PC-3 (cell line): ENCODE measurements at regions of chr1 and their contacts with region 1.

Region 1: GRCh38 chr1:169106095-169106920 is at the start of gene ATP1B1:
- DNase-seq: peak; percentile 96
- ATAC-seq: peak; percentile 76
- H3K4me3 ChIP-seq: peak within 1 kb of the TSS; percentile 93
- H3K27ac ChIP-seq: peak within 1 kb of the TSS; percentile 64
- H3K4me1 ChIP-seq: peaks cover 52% of the 10 kb centered on the region
- H3K27me3 ChIP-seq: no peaks in the 10 kb centered on the region
- CTCF ChIP-seq: 0 out of 2 replicates have a peak, but pooled peaks have one; percentile 7
- total RNA-seq, gene ATP1B1: 68.7 and 76.6 TPM in 2 replicates

Region 2: DNA sequence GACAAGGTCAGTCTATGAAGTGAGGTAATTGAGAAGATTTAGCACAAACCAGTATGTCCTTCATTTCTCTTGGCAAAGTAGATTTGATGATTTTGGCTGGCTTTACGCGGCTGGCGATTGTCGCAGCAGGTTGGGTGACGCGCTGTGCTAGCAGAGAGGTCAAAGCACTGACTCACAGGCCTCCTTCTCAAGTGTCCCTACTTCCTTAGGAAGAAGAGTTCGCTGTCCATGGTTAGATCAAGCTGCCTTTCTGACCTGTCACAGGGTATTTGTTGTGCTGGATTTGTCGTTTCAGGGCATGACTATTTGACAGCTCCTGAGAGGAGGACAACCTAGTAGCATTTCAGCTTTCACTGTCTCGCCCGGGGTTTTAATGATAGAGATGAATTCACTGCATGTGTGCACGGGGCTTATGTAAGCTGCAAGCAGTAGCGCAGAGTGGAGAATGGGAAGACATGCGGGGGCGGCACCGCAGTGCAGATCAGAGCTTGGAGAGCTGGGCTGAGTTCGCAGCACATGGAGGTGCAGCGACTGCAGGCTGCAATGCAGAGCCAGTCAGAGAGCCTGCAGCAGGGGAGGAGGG is 497.1 kb before region 1 on chr1:
- CTCF ChIA-PET with region 1: no interaction called
- POLR2A ChIA-PET with region 1: no interaction called
- intact Hi-C with region 1: loop called (anchors 5 kb)
- DNase-seq: peak; percentile 34
- ATAC-seq: no peak
- H3K4me3 ChIP-seq: no peak overlapping the region
- H3K27ac ChIP-seq: no peak overlapping the region
- H3K4me1 ChIP-seq: peaks cover 8% of the 10 kb centered on the region; the same call in 1 of the 2 replicates
- H3K27me3 ChIP-seq: no peaks in the 10 kb centered on the region
- CTCF ChIP-seq: no peak

Region 3: GRCh38 chr1:168752171-168752832 is 354.0 kb before region 1 on chr1:
- CTCF ChIA-PET with region 1: no interaction called
- POLR2A ChIA-PET with region 1: no interaction called
- intact Hi-C with region 1: loop called (anchors 5 kb)
- DNase-seq: peak; percentile 91
- ATAC-seq: peak; percentile 92
- H3K4me3 ChIP-seq: peak overlapping the region; percentile 47
- H3K27ac ChIP-seq: peak overlapping the region; percentile 77
- H3K4me1 ChIP-seq: peaks cover 24% of the 10 kb centered on the region
- H3K27me3 ChIP-seq: no peaks in the 10 kb centered on the region
- CTCF ChIP-seq: no peak

Region 4: DNA sequence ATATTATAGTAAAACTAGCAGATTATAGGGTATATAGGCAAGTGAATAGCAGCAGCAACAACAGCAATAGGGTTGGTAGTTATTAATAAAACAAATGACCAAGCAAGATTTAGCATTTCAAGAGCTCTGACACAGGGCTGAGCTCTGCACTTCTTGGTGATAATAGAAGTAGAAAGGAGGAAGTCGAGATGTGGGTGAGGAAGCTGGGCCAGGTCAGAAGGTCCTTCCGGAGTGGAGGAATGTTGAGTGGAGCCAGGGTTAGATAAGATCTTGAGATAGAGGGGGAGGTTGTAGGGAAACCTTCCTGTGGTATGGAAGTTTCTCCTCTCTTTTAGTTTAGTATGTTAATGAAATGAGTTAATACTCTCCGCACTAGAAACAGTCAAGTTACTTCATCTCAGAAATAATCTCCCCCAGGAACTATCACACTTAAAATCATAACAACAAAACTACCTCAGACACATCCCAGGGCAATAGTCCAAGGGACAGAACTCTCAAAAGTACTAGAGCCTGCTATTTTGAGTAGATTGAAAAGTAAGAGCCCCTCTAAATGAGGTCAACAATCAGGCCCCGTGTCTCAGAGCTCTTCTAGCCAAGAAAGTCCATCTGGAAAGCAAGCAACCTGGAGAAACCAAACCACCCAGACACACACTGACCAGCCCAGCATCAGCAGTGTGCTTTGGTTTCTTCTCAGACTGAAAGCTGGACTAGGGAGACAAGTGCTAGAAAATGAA is 45.2 kb before region 1 on chr1:
- CTCF ChIA-PET with region 1: no interaction called
- POLR2A ChIA-PET with region 1: interaction called, 8 read pairs
- intact Hi-C with region 1: loop called (anchors 1 kb)
- DNase-seq: peak; percentile 66
- ATAC-seq: peak; percentile 10
- H3K4me3 ChIP-seq: peak overlapping the region; percentile 8; the same call in 1 of the 2 replicates
- H3K27ac ChIP-seq: peak overlapping the region; percentile 93
- H3K4me1 ChIP-seq: peaks cover 34% of the 10 kb centered on the region
- H3K27me3 ChIP-seq: no peaks in the 10 kb centered on the region
- CTCF ChIP-seq: no peak

Region 5: DNA sequence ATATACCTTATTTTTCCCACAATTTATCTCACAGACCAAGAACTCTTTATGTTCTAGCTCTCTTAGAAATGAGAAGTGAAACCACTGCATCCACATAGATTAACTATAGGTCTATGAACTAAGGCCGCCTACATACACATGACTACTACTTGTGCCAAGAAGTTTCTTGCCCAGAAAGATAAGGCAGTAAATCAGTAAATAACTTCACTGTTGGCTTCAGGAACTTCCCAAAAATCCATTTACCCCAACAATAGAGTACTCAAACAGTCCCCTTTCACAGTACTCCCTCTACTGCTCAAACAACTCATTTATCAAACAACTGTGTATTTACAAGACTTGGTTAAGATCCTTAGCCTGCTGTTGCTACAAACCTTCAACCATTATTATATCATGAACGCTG is 164.8 kb after region 1 on chr1:
- CTCF ChIA-PET with region 1: no interaction called
- POLR2A ChIA-PET with region 1: no interaction called
- intact Hi-C with region 1: loop called (anchors 2 kb)
- DNase-seq: peak; percentile 50
- ATAC-seq: peak; percentile 69
- H3K4me3 ChIP-seq: no peak overlapping the region
- H3K27ac ChIP-seq: no peak overlapping the region
- H3K4me1 ChIP-seq: no peaks in the 10 kb centered on the region
- H3K27me3 ChIP-seq: no peaks in the 10 kb centered on the region
- CTCF ChIP-seq: peak; percentile 60

Region 6: DNA sequence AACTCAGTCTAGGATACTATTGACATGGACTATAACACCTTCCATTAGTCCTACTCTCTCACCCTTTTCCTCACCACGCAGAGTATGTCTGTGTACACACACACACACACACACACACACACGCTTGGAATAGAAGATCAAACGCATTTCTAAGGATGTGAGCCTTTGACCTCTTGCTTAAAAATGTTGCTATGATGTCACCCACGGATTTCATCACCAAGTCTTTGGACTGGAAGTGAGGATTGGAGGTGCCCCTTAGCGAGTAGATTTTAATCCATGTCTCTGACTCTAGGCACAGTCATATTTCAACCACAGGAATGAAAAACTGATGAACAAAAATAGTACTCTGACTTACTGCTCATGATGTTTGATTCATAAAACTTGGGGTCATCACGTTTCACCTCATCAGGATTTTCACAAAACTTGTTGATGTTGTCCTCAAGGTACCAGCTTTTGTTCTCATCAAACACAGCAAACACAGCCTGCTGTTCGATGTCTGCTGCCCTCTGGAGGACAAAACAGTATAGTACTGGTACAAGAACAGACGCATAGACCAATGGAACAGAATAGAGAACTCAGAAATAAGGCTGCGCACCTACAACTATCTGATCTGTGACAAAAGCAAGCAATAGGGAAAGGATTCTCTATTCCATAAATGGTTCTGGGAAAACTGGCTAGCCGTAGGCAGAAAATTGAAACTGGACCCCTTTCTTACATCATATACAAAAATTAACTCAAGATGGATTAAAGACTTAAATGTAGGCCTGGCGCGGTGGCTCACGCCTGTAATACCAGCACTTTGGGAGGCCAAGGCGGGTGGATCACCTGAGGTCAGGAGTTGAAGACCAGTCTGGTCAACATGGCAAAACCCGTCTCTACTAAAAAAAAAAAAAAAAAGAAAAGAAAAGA is 440.0 kb after region 1 on chr1:
- CTCF ChIA-PET with region 1: no interaction called
- POLR2A ChIA-PET with region 1: no interaction called
- intact Hi-C with region 1: loop called (anchors 2 kb)
- DNase-seq: peak; percentile 90
- ATAC-seq: peak; percentile 79
- H3K4me3 ChIP-seq: no peak overlapping the region
- H3K27ac ChIP-seq: no peak overlapping the region
- H3K4me1 ChIP-seq: no peaks in the 10 kb centered on the region
- H3K27me3 ChIP-seq: no peaks in the 10 kb centered on the region
- CTCF ChIP-seq: peak; percentile 94